ENCODE measurements at regions of chr1 and their contacts with region 1.

Region 1: DNA sequence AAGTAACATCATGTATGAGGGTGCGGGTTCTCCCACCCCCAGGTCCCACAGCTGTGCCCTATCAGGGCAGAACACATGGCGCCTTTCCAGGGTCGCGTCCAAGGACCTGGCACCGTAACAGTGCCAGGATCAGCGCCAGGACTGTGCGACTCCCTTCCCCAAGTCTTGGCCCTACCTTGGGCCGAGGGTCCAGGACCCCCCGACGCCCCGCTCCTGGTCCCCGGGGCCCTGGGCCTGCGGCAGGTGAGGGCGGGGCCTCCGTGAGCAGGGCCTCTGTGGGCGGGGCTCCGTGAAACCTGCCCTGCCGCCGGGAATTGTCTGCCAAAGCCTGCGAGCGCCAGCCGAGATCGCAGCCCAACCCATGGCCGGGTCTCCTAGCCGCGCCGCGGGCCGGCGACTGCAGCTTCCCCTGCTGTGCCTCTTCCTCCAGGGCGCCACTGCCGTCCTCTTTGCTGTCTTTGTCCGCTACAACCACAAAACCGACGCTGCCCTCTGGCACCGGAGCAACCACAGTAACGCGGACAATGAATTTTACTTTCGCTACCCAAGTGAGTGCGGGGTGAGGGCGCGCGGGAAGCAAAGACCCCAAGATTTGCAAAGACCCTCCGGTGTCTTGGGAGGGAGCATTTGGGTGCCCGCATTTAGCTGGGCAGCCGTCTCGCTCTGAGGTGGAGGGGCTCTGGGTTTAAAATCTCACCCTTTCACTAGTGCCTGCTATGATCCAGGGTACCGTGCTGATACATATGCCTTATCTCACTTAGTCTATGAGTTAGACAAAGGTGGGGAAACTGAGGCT is at the start of gene RHBG:
- DNase-seq: peak in 1 of 2 donors; percentile 27
- ATAC-seq: peak in 3 of 4 donors; percentile 16 to 37 (median 35)
- H3K4me3 ChIP-seq: peak within 1 kb of the TSS; percentile 62
- H3K27ac ChIP-seq: no peak within 1 kb of the TSS
- H3K4me1 ChIP-seq: no peaks in the 10 kb centered on the region
- H3K27me3 ChIP-seq: peaks cover 0 to 46% (median 3%) of the 10 kb centered on the region in 3 donors
- CTCF ChIP-seq: no peak
- total RNA-seq, gene RHBG: not detected

Region 2: DNA sequence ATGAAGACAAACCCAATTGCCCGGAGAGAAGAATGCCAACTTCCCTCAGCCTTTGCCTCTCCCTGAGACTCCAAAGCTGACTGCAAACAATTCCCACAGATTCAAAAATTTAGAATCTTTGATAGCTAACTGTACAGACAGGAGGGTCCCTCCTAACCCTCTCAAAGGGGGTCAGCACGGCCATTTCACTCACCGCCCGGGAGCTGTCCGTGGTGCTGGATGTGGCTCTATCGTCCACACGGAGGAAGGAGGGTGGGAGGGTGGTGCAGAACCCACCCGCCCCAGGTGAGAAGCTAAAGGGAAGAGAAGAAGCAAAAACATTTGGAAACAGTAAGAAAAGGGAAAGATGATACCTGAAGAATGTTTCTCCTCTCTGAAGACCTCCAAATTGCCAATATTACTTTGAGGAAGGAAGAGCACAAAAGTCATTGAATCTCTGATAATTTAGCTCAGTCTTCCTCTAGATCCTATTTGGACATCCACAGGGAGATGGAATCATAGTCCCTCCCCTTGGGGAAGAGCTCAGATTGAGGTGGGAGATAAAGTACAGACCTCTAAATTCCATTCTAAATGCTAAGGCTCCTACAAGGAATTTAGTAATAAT is 45.5 kb after region 1 on chr1:
- intact Hi-C with region 1: no loop called
- DNase-seq: peak in 1 of 2 donors; percentile 30
- ATAC-seq: no peak
- H3K4me3 ChIP-seq: no peak overlapping the region
- H3K27ac ChIP-seq: no peak overlapping the region
- H3K4me1 ChIP-seq: no peaks in the 10 kb centered on the region
- H3K27me3 ChIP-seq: peaks cover 8 to 80% (median 16%) of the 10 kb centered on the region in 3 donors
- CTCF ChIP-seq: no peak

Region 3: GRCh38 chr1:156489166-156489934 is 120.3 kb after region 1 on chr1:
- intact Hi-C with region 1: no loop called
- DNase-seq: peak; percentile 80 to 90
- ATAC-seq: peak; percentile 67 to 72 (median 68)
- H3K4me3 ChIP-seq: peak overlapping the region; percentile 98
- H3K27ac ChIP-seq: peak overlapping the region; percentile 99
- H3K4me1 ChIP-seq: peaks cover 91% of the 10 kb centered on the region
- H3K27me3 ChIP-seq: no peaks in the 10 kb centered on the region
- CTCF ChIP-seq: peak; percentile 37

Region 4: DNA sequence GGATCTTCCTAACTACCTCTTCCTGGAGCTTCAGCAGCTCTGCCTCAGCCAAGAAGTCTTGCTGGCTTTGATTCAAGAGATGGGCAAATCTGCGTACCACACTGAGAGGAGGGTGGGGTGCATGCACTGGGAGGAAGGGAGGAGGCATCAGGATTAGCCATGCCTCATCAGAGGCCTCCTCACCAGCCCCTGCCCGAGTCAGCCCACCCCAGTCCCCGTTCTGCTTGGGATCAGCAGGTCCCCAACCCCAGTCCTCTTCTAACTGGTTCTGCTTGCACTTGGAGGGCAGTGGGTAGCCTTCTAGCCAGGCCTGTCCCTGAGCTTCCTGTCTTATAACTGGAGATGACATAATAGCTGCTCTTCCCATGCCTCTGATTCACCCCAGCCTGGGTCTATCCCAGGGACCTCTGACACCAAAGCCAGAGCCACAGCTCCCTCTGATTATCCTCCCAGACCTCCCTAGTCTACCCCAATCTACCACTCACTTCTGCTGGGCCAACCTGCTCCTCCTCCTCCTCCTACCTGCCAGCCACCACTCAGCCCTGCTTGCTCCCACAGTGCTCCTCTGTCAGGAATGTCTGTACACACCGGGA is 171.8 kb after region 1 on chr1:
- intact Hi-C with region 1: loop called in 1 of 2 experiments (anchors 10 kb)
- DNase-seq: no peak
- ATAC-seq: peak in 3 of 4 donors; percentile 30 to 72 (median 33)
- H3K4me3 ChIP-seq: no peak overlapping the region
- H3K27ac ChIP-seq: no peak overlapping the region
- H3K4me1 ChIP-seq: no peaks in the 10 kb centered on the region
- H3K27me3 ChIP-seq: no peaks in the 10 kb centered on the region
- CTCF ChIP-seq: no peak

Region 5: GRCh38 chr1:156728597-156729462 is 359.7 kb after region 1 on chr1 and contains the start of gene ISG20L2:
- intact Hi-C with region 1: no loop called
- DNase-seq: peak; percentile 97 to 99
- ATAC-seq: peak; percentile 92 to 94 (median 94)
- H3K4me3 ChIP-seq: peak within 1 kb of the TSS; percentile 80
- H3K27ac ChIP-seq: peak within 1 kb of the TSS; percentile 99
- H3K4me1 ChIP-seq: peaks cover 45% of the 10 kb centered on the region
- H3K27me3 ChIP-seq: no peaks in the 10 kb centered on the region
- CTCF ChIP-seq: no peak
- total RNA-seq, gene ISG20L2: 7.4 to 19.8 (median 16.5) TPM

Region 6: DNA sequence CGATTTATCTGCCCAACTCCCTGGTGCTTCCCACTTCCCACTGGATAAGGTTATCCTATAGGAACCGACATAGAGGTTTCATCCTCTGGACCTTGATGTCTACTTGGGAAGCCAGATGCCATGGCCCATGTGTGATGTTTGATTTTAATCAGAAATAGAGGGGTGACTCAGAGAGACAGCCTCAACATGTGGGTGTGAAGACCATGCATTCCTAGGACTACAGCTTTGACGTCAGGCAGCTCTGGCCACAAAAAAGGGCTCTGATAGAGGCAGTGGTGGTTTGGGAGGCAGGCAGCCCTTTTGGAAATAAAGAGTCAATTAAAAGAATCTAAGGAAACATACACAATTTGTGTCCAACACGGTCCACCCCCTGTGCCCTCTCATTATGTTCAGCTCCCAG is 452.7 kb after region 1 on chr1:
- intact Hi-C with region 1: no loop called
- DNase-seq: no peak
- ATAC-seq: no peak
- H3K4me3 ChIP-seq: no peak overlapping the region
- H3K27ac ChIP-seq: no peak overlapping the region
- H3K4me1 ChIP-seq: no peaks in the 10 kb centered on the region
- H3K27me3 ChIP-seq: no peaks in the 10 kb centered on the region
- CTCF ChIP-seq: no peak